ENCODE measurements at regions of chr14 and their contacts with region 1.

Region 1: DNA sequence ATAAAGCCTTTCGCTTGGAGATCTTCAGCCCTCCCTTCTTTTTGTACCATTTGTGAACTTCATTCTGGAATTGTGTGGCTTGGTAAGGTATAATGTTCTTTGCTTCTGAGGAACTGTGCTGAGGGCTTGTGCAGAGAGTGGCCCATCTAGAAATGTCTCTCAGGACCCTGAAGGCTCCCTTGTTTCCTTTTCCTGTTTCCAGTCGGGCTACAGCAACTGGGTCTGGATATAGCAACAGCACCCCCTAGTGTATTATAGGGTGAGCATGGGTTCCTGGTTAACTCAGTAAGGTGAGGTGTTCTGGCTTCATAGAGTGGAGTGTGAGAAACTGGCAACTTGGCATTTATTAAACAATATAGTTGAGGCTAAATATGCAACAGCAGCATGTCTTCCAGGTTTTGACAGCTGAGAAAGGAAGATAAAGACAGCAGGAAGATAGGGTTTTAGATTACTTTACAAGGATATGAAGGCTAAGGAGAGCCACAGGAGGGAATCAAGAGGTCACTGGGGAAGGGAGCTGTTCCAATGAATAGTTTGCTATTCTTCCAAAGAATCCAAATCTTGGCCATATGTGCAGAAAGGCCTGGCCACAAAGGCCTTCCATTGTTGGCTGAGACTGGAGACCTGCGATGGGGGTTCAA is 49.1 kb upstream of the RNU6-8 start:
- ATAC-seq: peak; percentile 74 to 95 (median 84)
- H3K4me3 ChIP-seq: no peak overlapping the region
- H3K27ac ChIP-seq: no peak overlapping the region
- H3K4me1 ChIP-seq: peaks cover 3 to 7% of the 10 kb centered on the region in 2 donors

Region 2: DNA sequence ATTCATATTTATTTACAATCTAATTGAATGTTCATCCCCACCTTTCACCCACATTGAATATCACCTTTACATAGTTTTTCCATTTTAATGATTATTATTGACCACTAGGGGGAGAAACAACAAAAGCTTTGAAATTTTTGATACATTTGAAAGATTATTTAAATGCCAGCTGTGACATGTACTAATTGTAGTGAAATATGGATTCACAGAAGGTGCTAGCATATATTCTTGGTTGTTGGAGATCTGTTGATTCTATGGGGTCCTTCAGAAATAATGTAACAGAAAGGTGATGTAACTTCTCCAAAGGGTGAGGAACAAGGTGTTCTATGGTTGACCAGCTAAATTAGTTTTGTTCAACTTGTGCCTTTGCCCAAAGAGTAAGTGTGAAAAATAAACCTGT is 741.9 kb before region 1 on chr14:
- in situ Hi-C with region 1: loop called in 4 of 9 experiments (anchors 25 kb)
- ATAC-seq: no peak
- H3K4me3 ChIP-seq: no peak overlapping the region
- H3K27ac ChIP-seq: no peak overlapping the region
- H3K4me1 ChIP-seq: no peaks in the 10 kb centered on the region

Region 3: DNA sequence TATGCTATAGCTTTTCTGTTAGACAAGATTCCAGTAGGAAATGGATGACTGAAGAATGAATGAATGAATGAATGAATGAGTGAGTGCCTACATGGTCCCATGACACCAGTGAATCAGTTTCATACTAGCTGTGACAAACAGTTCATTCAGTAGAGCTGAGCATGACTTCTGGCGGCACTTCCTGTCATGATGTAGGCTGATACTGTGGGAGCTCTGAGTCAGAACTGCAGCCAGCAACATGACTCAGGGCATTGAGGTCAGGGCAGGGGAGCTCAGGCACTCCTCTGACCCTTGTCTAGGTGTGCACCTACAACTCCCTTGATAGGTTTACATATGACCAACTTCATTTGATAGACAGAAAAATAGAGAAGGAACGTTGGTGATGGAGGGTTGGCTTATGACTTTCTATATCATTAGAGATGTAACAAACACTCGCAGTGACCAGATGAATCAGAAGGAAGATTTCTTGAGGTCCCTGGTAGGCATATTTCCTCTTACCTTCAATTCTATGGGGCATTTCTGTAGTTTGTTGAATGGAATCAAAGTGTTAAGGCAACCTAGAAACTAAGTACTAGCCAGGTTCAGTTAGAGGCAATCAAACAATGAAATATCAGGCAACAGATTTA is 314.3 kb before region 1 on chr14:
- in situ Hi-C with region 1: loop called in 2 of 9 experiments (anchors 10 to 25 kb)
- ATAC-seq: peak in 7 of 8 experiments; percentile 89 to 98 (median 93)
- H3K4me3 ChIP-seq: no peak overlapping the region
- H3K27ac ChIP-seq: no peak overlapping the region
- H3K4me1 ChIP-seq: peaks cover 12 to 14% of the 10 kb centered on the region in 2 donors

Region 4: DNA sequence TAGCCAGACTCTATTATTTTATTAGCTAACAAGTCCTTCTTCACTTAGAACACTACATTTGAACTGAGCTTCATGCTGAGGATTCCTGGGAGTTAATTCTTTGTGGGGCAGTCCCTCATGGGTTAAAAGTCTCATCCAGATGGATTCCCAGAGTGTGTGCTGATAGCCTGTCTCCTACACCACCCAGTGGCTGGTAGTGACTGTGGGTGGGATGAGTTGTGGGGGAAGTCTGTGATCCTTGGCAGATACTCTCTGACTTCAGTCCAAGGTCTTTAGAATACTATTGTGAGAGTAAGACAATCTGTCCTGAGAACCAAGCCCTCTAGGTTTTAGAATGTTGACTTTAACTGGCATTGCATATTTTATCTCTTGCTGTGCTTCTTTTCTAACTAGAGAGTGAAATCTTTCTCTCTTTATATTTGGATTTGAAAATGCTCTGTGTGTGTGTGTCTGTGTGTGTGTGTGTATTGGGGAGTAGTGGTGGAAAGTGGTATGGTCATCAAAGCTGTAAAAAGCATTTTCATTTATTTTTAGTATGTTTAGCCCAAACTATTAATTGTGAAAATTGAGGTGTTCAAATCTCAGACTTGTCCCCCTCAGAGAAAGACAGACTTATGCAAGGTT is 114.2 kb after region 1 on chr14:
- in situ Hi-C with region 1: loop called in 1 of 9 experiments (anchors 25 kb)
- ATAC-seq: peak; percentile 67 to 89 (median 81)
- H3K4me3 ChIP-seq: no peak overlapping the region
- H3K27ac ChIP-seq: no peak overlapping the region
- H3K4me1 ChIP-seq: peaks cover 16 to 18% of the 10 kb centered on the region in 2 donors

Region 5: DNA sequence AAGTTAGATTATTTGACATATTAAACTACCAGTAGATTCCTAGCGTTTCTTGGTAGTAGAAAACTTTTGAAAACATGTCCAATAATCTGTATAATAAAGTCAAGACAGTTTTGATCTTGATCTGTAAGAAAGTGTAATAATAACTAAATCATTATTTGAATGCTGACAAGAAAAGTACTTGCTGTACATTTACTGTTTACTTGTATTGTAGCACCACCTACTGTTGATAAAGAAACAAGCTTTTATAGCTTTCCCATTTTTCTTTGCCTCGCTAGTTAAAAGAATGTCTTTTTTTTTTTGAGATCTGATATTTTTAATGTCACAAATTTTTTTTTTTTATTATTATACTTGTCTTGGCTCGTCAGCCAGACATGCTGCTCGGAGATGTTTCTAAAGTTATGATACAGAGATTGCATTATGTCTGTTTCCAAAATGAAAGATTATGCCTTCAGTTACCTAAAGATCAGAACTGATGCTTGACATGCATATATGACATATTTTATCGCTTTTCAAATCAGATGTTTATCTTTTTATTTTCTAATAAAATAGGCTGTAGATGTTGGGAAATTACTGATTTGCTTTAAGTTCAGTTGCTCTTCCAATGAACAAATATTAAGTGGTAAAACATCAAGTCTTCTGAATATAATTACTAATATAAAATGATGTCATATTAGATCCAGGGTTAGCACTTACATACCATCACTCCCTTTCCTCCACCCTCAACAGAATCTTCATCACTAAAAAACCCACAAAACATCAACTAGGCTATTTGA is 217.4 kb after region 1 on chr14:
- in situ Hi-C with region 1: loop called in 1 of 9 experiments (anchors 10 kb)
- ATAC-seq: peak in 3 of 8 experiments; percentile 41 to 65 (median 55)
- H3K4me3 ChIP-seq: no peak overlapping the region
- H3K27ac ChIP-seq: no peak overlapping the region
- H3K4me1 ChIP-seq: peaks cover 12 to 16% of the 10 kb centered on the region in 2 donors

Measured in motor neuron (in vitro differentiated cells).